Caco-2 (cell line): ENCODE measurements at regions of chr9 and their contacts with region 1.

Region 1: DNA sequence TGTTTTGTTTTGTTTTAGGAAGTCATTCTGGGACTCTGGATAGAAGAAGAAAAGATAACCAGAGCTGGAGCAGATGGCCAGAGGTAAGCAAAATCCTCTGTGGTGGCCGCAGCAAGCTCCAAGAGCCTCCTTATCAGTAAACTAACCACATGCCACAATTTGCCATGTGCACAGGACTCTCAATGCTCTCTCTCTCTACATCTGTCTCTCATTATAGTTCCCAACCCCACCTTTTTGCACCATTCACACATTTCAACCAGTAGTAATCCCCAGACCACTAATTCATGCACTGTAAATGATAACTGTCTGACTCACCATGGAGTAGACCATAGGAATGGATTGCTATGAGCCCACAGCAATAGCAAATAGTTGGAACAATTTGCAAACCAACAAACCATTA is 526.1 kb downstream of the TLR4 start:
- DNase-seq: no peak
- H3K4me3 ChIP-seq: no peak overlapping the region
- H3K4me3 Mint-ChIP-seq: no peak overlapping the region
- H3K27ac Mint-ChIP-seq: no peak overlapping the region
- H3K4me1 ChIP-seq: no peaks in the 10 kb centered on the region
- H3K4me1 Mint-ChIP-seq: no peaks in the 10 kb centered on the region
- H3K27me3 ChIP-seq: no peaks in the 10 kb centered on the region
- H3K27me3 Mint-ChIP-seq: no peaks in the 10 kb centered on the region
- CTCF ChIP-seq: no peak

Region 2: DNA sequence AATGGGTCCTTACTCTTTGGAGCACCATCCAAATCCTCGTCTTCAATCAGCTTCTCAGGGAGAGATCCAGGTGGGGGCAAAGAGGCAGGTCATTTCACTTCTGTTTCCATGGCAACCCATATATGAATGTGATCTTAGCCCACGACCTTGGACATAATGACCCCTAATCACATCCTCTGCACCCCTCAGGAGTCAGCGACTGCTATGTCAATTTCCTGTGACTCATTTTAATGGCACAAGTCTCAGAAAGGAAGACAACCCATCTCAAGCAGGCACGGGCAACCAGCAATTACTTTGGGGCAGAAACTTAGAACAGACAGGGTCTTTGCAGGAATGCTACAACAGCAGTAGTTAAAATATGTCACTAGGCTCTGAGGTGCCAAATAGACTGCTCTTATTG is 65.1 kb after region 1 on chr9:
- CTCF ChIA-PET with region 1: no interaction called
- POLR2A ChIA-PET with region 1: no interaction called
- intact Hi-C with region 1: loop called (anchors 2 kb)
- DNase-seq: no peak
- H3K4me3 ChIP-seq: no peak overlapping the region
- H3K4me3 Mint-ChIP-seq: no peak overlapping the region
- H3K27ac Mint-ChIP-seq: no peak overlapping the region
- H3K4me1 ChIP-seq: no peaks in the 10 kb centered on the region
- H3K4me1 Mint-ChIP-seq: no peaks in the 10 kb centered on the region
- H3K27me3 ChIP-seq: no peaks in the 10 kb centered on the region
- H3K27me3 Mint-ChIP-seq: no peaks in the 10 kb centered on the region
- CTCF ChIP-seq: no peak